ENCODE measurements at regions of chr15 and their contacts with region 1.

Region 1: GRCh38 chr15:39125904-39126303 is 455.0 kb upstream of the THBS1 start:
- DNase-seq: peak in 1 of 2 experiments; percentile 22
- H3K4me3 ChIP-seq: no peak overlapping the region
- H3K27ac ChIP-seq: no peak overlapping the region
- H3K4me1 ChIP-seq: peaks cover 74% of the 10 kb centered on the region
- H3K27me3 ChIP-seq: no peaks in the 10 kb centered on the region
- CTCF ChIP-seq: peak; percentile 51; the same call in 1 of the 2 replicates

Region 2: DNA sequence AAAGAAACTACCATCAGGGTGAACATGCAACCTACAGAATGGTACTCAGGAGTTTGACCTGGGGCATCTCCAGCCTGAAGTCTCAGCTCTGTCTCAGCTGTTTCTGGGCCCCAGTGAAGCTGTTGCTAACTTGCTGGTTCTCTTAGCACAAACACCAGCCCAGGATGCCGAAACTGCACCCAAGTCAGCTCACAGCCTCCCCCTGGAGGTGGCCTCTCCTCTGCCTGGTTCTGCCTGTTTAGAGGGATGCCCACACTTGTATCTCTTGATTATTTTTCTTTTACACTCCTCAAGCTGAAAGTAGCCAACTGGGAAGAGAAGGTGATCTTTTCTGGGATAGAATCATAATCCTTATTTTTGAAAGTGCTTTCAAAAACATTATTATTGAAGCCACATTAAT is 272.3 kb before region 1 on chr15:
- CTCF ChIA-PET with region 1: interaction called, 12 read pairs
- POLR2A ChIA-PET with region 1: no interaction called
- intact Hi-C with region 1: no loop called
- DNase-seq: no peak
- H3K4me3 ChIP-seq: no peak overlapping the region
- H3K27ac ChIP-seq: no peak overlapping the region
- H3K4me1 ChIP-seq: no peaks in the 10 kb centered on the region
- H3K27me3 ChIP-seq: no peaks in the 10 kb centered on the region
- CTCF ChIP-seq: no peak; the same call in 1 of the 2 replicates

Region 3: GRCh38 chr15:39084683-39085530 is 41.0 kb before region 1 on chr15:
- CTCF ChIA-PET with region 1: no interaction called
- POLR2A ChIA-PET with region 1: interaction called, 41 read pairs
- intact Hi-C with region 1: no loop called
- DNase-seq: no peak
- H3K4me3 ChIP-seq: no peak overlapping the region
- H3K27ac ChIP-seq: no peak overlapping the region
- H3K4me1 ChIP-seq: no peaks in the 10 kb centered on the region
- H3K27me3 ChIP-seq: no peaks in the 10 kb centered on the region
- CTCF ChIP-seq: no peak

Region 4: DNA sequence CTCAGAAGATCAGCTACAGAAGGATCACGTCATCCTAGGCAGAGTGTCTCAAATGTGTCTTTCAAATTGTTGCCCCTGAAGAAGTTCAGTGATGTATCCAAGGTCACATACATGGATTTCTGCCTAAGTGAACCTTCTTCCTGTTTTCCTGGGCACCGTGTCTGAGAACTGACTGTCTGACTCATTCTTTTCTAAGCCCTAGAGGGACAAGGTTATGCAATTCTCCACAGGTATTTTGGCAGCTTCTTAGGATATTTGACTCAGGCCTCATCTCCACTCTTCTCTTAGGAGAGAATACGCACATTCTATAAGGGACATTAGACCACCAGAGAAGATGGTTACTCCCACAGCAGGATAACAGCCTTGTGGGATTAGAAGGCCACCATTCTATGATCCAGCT is 63.0 kb after region 1 on chr15:
- CTCF ChIA-PET with region 1: no interaction called
- POLR2A ChIA-PET with region 1: no interaction called
- intact Hi-C with region 1: loop called (anchors 1 kb)
- DNase-seq: peak; percentile 36 to 85
- H3K4me3 ChIP-seq: no peak overlapping the region
- H3K27ac ChIP-seq: peak overlapping the region; percentile 52
- H3K4me1 ChIP-seq: peaks cover 35% of the 10 kb centered on the region
- H3K27me3 ChIP-seq: no peaks in the 10 kb centered on the region
- CTCF ChIP-seq: no peak

Region 5: GRCh38 chr15:39404767-39405181 is 278.9 kb after region 1 on chr15:
- CTCF ChIA-PET with region 1: no interaction called
- POLR2A ChIA-PET with region 1: interaction called, 4 read pairs
- intact Hi-C with region 1: loop called (anchors 1 kb)
- DNase-seq: peak; percentile 70 to 95
- H3K4me3 ChIP-seq: no peak overlapping the region
- H3K27ac ChIP-seq: no peak overlapping the region
- H3K4me1 ChIP-seq: peaks cover 32% of the 10 kb centered on the region
- H3K27me3 ChIP-seq: no peaks in the 10 kb centered on the region
- CTCF ChIP-seq: no peak

Measured in PC-9 (cell line).